IMR-90 (cell line): ENCODE measurements at regions of chr6 and their contacts with region 1.

Region 1: GRCh38 chr6:69719602-69720193 is 77.1 kb downstream of the LMBRD1 start:
- DNase-seq: peak; percentile 37
- ATAC-seq: peak; percentile 72
- H3K4me3 ChIP-seq: no peak overlapping the region
- H3K27ac ChIP-seq: no peak overlapping the region
- H3K4me1 ChIP-seq: no peaks in the 10 kb centered on the region
- H3K27me3 ChIP-seq: no peaks in the 10 kb centered on the region
- CTCF ChIP-seq: peak; percentile 47
- POLR2A ChIP-seq: no peak
- RAD21 ChIP-seq: peak; percentile 34

Region 2: DNA sequence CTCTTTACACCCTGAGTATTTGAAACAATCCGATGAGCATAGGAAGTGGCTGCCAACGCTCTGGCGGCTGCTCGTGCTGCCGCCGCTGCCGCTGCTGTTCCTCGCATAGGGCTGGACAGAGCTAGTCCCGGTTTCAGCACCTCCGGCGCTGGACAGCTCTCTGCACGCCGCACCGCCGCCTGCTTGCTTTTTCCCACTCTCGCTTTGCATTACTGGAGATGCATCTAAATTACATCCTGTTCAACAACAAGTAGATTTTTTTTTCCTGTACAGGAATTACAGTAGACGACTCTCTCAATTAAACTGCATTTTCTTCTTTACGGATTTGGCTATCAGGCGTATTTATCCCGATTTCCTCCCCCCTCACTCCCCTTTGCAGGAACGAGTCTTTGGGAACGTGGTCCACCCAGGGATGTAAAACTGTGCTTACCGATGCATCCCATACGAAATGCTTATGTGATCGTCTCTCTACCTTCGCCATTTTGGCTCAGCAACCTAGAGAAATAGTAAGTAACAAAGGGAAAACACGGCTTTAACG is 486.7 kb before region 1 on chr6:
- CTCF ChIA-PET with region 1: no interaction called
- POLR2A ChIA-PET with region 1: no interaction called
- dilution Hi-C with region 1: no loop called
- in situ Hi-C with region 1: no loop called
- intact Hi-C with region 1: loop called (anchors 10 kb)
- DNase-seq: peak; percentile 55
- ATAC-seq: peak; percentile 99
- H3K4me3 ChIP-seq: no peak overlapping the region
- H3K27ac ChIP-seq: no peak overlapping the region
- H3K4me1 ChIP-seq: no peaks in the 10 kb centered on the region
- H3K27me3 ChIP-seq: no peaks in the 10 kb centered on the region
- CTCF ChIP-seq: no peak
- POLR2A ChIP-seq: no peak
- RAD21 ChIP-seq: no peak